ENCODE measurements at regions of chr7 and their contacts with region 1.

Region 1: DNA sequence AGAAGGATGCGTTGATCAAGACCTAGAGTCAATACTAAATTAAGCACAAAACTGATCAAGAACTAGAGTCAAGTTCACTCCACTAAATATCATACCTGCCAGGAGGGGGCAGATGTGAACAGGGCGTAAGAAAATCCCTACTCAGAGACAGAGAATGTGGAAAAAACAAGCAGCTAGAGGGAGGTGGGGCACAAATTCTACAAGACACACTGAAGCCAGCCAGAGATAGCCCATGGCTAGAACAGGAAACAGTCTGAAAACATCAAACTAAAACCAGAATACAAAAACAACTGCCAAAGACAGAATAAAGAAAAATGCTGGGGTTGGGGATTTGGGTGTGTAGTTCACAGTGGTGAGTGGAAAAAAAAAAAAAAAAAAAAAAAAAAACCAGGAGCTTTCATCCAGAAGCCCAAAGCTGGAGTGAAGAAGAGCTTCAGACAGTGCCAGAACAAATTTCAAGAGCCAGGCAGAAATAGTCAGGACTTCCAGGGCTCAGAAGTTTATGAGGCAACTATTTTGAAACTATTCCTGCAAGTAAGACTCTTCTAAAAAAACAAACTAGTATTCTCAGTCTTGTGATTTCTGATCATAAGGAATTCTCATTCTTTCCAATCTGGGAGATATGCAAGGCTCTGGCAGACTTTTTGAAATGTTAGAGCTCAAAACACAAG is 118.3 kb downstream of the CCDC71L start:
- DNase-seq: peak; percentile 89
- ATAC-seq: peak; percentile 96
- H3K4me3 ChIP-seq: no peak overlapping the region
- H3K27ac ChIP-seq: peak overlapping the region; percentile 81; the same call in 1 of the 2 replicates
- H3K4me1 ChIP-seq: peaks cover 8% of the 10 kb centered on the region
- H3K27me3 ChIP-seq: no peaks in the 10 kb centered on the region
- CTCF ChIP-seq: peak; percentile 69
- POLR2A ChIP-seq: no peak
- RAD21 ChIP-seq: peak; percentile 77

Region 2: GRCh38 chr7:106524690-106525059 is 18.0 kb before region 1 on chr7:
- CTCF ChIA-PET with region 1: no interaction called
- POLR2A ChIA-PET with region 1: interaction called, 22 read pairs
- dilution Hi-C with region 1: no loop called
- in situ Hi-C with region 1: no loop called
- intact Hi-C with region 1: no loop called
- DNase-seq: no peak
- ATAC-seq: no peak
- H3K4me3 ChIP-seq: no peak overlapping the region
- H3K27ac ChIP-seq: no peak overlapping the region
- H3K4me1 ChIP-seq: no peaks in the 10 kb centered on the region
- H3K27me3 ChIP-seq: no peaks in the 10 kb centered on the region
- CTCF ChIP-seq: no peak
- POLR2A ChIP-seq: no peak
- RAD21 ChIP-seq: no peak

Region 3: GRCh38 chr7:106731187-106731586 is 188.5 kb after region 1 on chr7:
- CTCF ChIA-PET with region 1: interaction called, 25 read pairs
- POLR2A ChIA-PET with region 1: no interaction called
- dilution Hi-C with region 1: no loop called
- in situ Hi-C with region 1: loop called (anchors 5 kb)
- intact Hi-C with region 1: loop called (anchors 1 kb)
- DNase-seq: no peak
- ATAC-seq: no peak
- H3K4me3 ChIP-seq: no peak overlapping the region
- H3K27ac ChIP-seq: no peak overlapping the region
- H3K4me1 ChIP-seq: peaks cover 3% of the 10 kb centered on the region; the same call in 1 of the 2 replicates
- H3K27me3 ChIP-seq: no peaks in the 10 kb centered on the region
- CTCF ChIP-seq: no peak
- POLR2A ChIP-seq: no peak
- RAD21 ChIP-seq: no peak

Region 4: GRCh38 chr7:106736508-106737201 is 194.0 kb after region 1 on chr7:
- CTCF ChIA-PET with region 1: interaction called, 25 read pairs
- POLR2A ChIA-PET with region 1: no interaction called
- dilution Hi-C with region 1: no loop called
- in situ Hi-C with region 1: loop called (anchors 5 kb)
- intact Hi-C with region 1: loop called (anchors 1 kb)
- DNase-seq: peak; percentile 83
- ATAC-seq: peak; percentile 95
- H3K4me3 ChIP-seq: no peak overlapping the region; the same call in 1 of the 2 replicates
- H3K27ac ChIP-seq: peak overlapping the region; percentile 77
- H3K4me1 ChIP-seq: peaks cover 5% of the 10 kb centered on the region
- H3K27me3 ChIP-seq: no peaks in the 10 kb centered on the region
- CTCF ChIP-seq: peak; percentile 82
- POLR2A ChIP-seq: no peak
- RAD21 ChIP-seq: peak; percentile 89